Dorsolateral prefrontal cortex (tissue), 120 donors: ENCODE measurements at regions of chr11 and their contacts with region 1.

Region 1: DNA sequence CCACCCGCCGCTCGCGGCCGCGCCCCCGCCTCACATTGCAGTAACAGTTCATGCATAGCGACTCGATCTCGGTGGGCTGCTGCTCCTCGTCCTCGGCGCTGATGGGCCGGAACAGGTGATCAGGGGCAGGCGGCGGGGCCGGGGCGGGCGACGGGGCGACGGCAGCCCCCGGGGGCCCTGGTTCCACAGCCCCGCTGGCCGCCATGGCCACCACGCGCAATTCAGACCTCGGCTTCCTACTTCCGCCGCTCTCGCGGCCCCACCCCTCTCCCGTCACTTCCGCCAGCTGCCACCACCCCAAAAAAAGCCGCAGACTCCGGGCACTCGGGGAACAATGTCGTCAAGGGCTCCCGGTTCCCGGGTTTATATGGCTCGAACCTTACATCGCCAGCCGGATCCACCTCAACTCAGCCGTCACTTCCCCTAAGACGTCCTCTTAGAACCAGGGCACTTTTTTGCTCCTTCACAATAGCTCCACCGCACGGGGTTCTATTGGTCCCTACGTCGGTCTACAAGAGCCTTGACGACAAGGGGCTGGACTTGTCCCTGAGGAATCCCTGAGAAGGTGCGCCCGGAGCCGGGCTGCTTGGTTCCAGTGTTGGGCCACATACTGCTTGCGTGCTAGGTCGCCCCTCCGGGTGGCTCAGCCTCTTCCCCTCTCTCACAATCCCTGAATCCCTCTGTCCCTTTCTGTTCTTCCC is at the start of gene ZPR1:
- DNase-seq: peak; percentile 77 to 93 (median 88)
- H3K4me3 ChIP-seq: peak within 1 kb of the TSS; percentile 66 to 99 (median 95)
- H3K27ac ChIP-seq: peak within 1 kb of the TSS in 58 of 59 donors; percentile 6 to 92 (median 82)
- H3K27me3 ChIP-seq: no peaks in the 10 kb centered on the region
- CTCF ChIP-seq: peak in 28 of 56 donors; percentile 8 to 47 (median 28)
- total RNA-seq, gene ZPR1: 31.6 to 66.9 (median 46.6) TPM

Region 2: GRCh38 chr11:116835791-116836631 is 48.1 kb after region 1 on chr11:
- intact Hi-C with region 1: loop called (anchors 2 kb)
- DNase-seq: peak; percentile 66 to 90 (median 84)
- H3K4me3 ChIP-seq: peak overlapping the region; percentile 19 to 67 (median 53)
- H3K27ac ChIP-seq: peak overlapping the region in 56 of 59 donors; percentile 3 to 90 (median 74)
- H3K27me3 ChIP-seq: no peaks in the 10 kb centered on the region
- CTCF ChIP-seq: peak; percentile 26 to 81 (median 70)

Region 3: GRCh38 chr11:116879800-116880625 is 92.1 kb after region 1 on chr11:
- intact Hi-C with region 1: loop called in 1 of 2 experiments (anchors 10 kb)
- DNase-seq: no peak
- H3K4me3 ChIP-seq: no peak overlapping the region
- H3K27ac ChIP-seq: peak overlapping the region in 52 of 59 donors; percentile 3 to 88 (median 67)
- H3K27me3 ChIP-seq: no peaks in the 10 kb centered on the region
- CTCF ChIP-seq: peak in 55 of 56 donors; percentile 39 to 88 (median 74)

Region 4: DNA sequence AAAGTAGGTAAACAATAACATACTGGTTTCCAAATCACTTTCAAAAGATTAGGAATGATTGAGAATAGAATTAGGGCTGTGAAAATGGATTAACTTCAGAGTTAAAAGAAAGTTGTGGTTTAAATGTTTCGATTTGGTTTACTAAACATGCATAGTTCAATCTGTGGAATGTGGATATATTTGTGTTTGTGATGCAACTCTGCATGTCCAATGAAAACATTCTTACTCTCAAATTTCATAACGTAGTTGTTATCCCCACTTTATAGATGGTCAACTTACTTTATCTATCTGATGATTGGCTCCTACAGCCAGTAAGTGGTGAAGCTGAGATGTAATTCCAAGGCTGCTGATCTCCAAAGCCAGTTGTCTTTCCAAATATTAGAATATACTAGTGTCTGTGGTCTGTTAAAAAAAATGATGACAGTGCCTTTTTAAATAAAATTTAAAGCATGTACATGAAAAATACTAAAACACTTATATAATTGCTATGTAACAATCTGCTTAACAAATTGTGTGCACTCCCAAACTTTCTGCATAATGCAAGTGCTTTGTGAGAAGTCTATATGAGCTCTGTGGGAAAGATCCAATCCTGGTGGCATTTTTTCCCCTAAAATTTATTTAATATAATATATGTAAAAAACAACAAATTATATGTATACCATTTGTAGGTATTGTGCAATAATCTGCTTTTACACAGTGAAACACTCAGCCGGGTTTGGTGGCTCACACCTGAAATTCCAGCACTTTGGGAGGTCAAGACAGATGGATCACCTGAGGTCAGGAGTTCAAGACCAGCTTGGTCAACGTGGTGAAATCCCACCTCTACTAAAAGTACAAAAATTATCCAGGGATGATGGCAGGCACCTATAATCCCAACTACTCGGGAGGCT is 320.0 kb after region 1 on chr11:
- intact Hi-C with region 1: loop called (anchors 2 kb)
- DNase-seq: no peak
- H3K4me3 ChIP-seq: no peak overlapping the region
- H3K27ac ChIP-seq: no peak overlapping the region
- H3K27me3 ChIP-seq: no peaks in the 10 kb centered on the region
- CTCF ChIP-seq: no peak

Region 5: GRCh38 chr11:117178210-117179034 is 390.5 kb after region 1 on chr11 and contains the start of gene SIDT2:
- intact Hi-C with region 1: loop called in 1 of 2 experiments (anchors 5 kb)
- DNase-seq: peak; percentile 91 to 97 (median 96)
- H3K4me3 ChIP-seq: peak within 1 kb of the TSS; percentile 69 to 100 (median 96)
- H3K27ac ChIP-seq: peak within 1 kb of the TSS; percentile 70 to 98 (median 92)
- H3K27me3 ChIP-seq: no peaks in the 10 kb centered on the region
- CTCF ChIP-seq: peak in 32 of 56 donors; percentile 3 to 57 (median 31)
- total RNA-seq, gene SIDT2: 44.3 to 113 (median 69.8) TPM